Tibial artery (tissue), 4 donors: ENCODE measurements at regions of chr6 and their contacts with region 1.

Region 1: GRCh38 chr6:16761471-16762267 is 409 bp upstream of the ATXN1 start:
- DNase-seq: peak; percentile 87 to 94
- H3K4me3 ChIP-seq: peak overlapping the region; percentile 69 to 86
- H3K27ac ChIP-seq: peak overlapping the region; percentile 91 to 99
- H3K4me1 ChIP-seq: peaks cover 0 to 50% (median 28%) of the 10 kb centered on the region in 4 donors
- H3K27me3 ChIP-seq: no peaks in the 10 kb centered on the region
- CTCF ChIP-seq: peak in 1 of 2 experiments; percentile 29

Region 2: DNA sequence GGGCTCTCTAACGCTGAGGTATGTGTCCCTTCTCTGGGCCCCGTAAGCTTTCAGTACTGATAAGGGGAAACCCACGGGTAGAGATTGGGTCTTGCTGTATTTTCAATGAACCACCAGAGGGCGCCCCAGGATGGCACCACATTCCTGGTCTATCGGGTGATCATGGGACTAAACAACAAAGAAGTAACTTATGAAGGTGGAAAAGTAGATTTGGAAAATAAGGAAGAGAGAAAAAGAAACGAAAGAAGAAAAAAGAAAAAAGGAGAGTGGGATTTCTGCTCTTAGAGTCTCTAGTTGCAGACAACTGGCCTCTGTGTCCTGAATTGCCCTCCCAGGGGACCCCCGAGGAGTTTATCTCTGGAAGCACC is 429.5 kb before region 1 on chr6:
- intact Hi-C with region 1: loop called (anchors 5 kb)
- DNase-seq: peak; percentile 74 to 88
- H3K4me3 ChIP-seq: no peak overlapping the region
- H3K27ac ChIP-seq: peak overlapping the region in 1 of 2 donors; percentile 27
- H3K4me1 ChIP-seq: peaks cover 4 to 52% (median 36%) of the 10 kb centered on the region in 4 donors
- H3K27me3 ChIP-seq: no peaks in the 10 kb centered on the region
- CTCF ChIP-seq: peak; percentile 89 to 91

Region 3: DNA sequence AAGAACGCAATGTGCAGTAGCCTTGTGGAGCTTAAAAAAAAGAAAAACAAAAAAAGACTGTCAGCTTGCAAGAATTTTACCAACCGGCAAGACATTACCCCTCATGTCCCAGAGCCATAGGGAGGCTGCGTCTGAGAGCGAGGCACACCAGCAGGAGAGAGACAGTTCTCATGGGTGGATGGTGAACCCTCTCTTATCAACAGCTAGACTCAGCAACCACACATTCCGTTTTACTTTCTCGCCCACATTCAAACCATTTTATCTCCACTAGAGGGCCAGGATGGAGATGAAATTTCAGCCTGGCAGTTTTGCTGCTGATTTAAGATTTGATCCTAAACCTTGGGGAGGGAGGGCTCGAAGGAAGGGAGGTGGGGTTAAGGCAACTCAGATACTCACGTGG is 247.4 kb before region 1 on chr6:
- intact Hi-C with region 1: loop called (anchors 10 kb)
- DNase-seq: no peak
- H3K4me3 ChIP-seq: peak overlapping the region in 1 of 2 donors; percentile 21
- H3K27ac ChIP-seq: peak overlapping the region; percentile 7 to 27
- H3K4me1 ChIP-seq: peaks cover 0 to 40% (median 32%) of the 10 kb centered on the region in 4 donors
- H3K27me3 ChIP-seq: no peaks in the 10 kb centered on the region
- CTCF ChIP-seq: peak; percentile 44 to 63

Region 4: DNA sequence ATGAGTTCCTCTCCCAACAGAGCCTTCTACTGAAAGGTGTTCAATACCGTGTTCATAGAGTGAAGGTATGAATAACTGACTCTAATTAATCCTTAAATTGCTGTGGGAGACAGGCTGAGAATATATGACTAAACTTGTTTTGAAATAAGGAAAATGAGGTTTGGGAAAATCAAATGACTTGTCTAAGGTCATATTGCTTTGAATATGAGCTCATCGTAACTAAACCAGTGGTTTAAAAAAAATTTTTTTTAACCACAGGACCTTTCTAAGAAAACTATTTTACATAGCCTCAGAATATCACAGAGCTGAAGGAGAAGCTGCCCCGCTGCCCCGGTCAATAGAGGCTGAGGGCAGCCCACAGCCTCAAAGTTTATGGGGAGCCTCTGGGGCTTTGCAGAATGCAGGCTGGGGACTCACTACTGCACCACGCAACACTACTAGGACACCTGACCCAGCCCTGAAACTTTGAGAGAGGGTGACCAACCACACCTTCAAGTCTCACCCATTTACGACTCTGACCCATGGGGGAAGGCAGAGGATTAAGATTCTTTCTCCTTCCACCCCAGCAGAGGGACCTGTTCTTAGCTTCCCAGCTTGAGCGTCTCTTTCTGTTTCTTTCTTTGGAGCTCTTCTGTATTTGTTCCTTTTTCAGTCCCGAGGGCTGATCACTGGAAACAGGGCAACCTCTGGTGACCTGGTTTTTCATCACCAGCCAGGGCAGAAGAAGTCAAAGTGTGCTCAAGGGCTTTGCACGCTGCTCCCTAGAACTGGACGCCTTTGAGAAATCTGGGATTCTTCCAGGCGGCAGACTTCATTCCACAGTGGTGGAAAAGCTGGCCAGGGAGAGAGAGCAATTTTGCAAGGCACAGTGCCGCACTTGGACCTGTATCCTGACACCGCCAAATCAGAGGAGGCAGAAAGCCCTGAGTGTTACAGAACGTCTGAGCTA is 220.6 kb before region 1 on chr6:
- intact Hi-C with region 1: loop called (anchors 10 kb)
- DNase-seq: peak; percentile 56 to 89
- H3K4me3 ChIP-seq: peak overlapping the region; percentile 17
- H3K27ac ChIP-seq: peak overlapping the region; percentile 52 to 73
- H3K4me1 ChIP-seq: peaks cover 0 to 54% (median 38%) of the 10 kb centered on the region in 4 donors
- H3K27me3 ChIP-seq: no peaks in the 10 kb centered on the region
- CTCF ChIP-seq: peak; percentile 34 to 37

Region 5: GRCh38 chr6:16684896-16685554 is 76.6 kb before region 1 on chr6:
- intact Hi-C with region 1: loop called (anchors 10 kb)
- DNase-seq: no peak
- H3K4me3 ChIP-seq: no peak overlapping the region
- H3K27ac ChIP-seq: no peak overlapping the region
- H3K4me1 ChIP-seq: peaks cover 0 to 67% (median 16%) of the 10 kb centered on the region in 4 donors
- H3K27me3 ChIP-seq: no peaks in the 10 kb centered on the region
- CTCF ChIP-seq: no peak